MCF 10A (cell line): ENCODE measurements at regions of chr19 and their contacts with region 1.

Region 1: DNA sequence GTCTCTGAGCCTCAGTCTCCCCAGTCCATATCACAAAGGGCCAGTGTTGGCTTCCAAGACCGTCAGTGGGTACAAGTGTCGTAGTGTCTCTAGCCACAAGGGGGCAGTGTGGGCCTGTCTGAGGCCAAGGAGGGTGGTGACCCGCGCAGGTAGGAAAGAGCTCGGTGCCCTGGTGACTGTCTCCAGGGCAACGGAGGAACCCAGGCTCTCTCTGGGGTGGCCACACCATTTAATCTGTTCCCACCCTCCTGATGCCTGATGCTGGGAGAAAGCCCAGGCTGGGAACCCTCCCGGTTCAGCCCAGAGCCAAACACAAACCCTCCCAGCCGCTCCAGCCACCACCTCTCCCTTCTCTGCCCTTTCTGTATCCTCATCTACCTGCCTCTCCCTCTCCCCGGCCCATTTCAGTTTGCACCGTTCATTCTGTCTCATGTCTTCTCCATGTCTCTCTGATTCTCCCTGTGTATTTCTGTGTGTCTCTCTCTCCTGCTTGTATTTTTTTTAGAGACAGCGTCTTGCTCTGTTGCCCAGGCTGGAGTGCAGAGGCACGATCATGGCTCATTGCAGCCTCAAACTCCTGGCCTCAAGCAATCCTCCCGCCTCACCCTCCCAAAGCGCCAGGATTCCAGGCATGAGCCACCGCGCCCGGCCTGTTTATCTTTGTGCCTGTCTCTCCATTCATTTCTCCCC is 17.5 kb upstream of the MEIS3 start:
- DNase-seq: peak; percentile 81
- H3K4me3 Mint-ChIP-seq: no peak overlapping the region
- H3K27ac Mint-ChIP-seq: no peak overlapping the region
- H3K4me1 Mint-ChIP-seq: no peaks in the 10 kb centered on the region
- H3K27me3 Mint-ChIP-seq: peaks cover 39% of the 10 kb centered on the region
- CTCF ChIP-seq: peak; percentile 91

Region 2: GRCh38 chr19:47231215-47231984 is 205.5 kb before region 1 on chr19:
- CTCF ChIA-PET with region 1: no interaction called
- POLR2A ChIA-PET with region 1: no interaction called
- intact Hi-C with region 1: no loop called
- DNase-seq: peak; percentile 76
- H3K4me3 Mint-ChIP-seq: no peak overlapping the region
- H3K27ac Mint-ChIP-seq: peak overlapping the region; percentile 87
- H3K4me1 Mint-ChIP-seq: peaks cover 12% of the 10 kb centered on the region
- H3K27me3 Mint-ChIP-seq: no peaks in the 10 kb centered on the region
- CTCF ChIP-seq: no peak

Region 3: GRCh38 chr19:47483800-47484690 is 47.2 kb after region 1 on chr19 and contains the start of gene KPTN:
- CTCF ChIA-PET with region 1: interaction called, 10 read pairs
- POLR2A ChIA-PET with region 1: interaction called, 5 read pairs
- intact Hi-C with region 1: no loop called
- DNase-seq: peak; percentile 87
- H3K4me3 Mint-ChIP-seq: peak within 1 kb of the TSS; percentile 99
- H3K27ac Mint-ChIP-seq: peak within 1 kb of the TSS; percentile 99
- H3K4me1 Mint-ChIP-seq: peaks cover 5% of the 10 kb centered on the region
- H3K27me3 Mint-ChIP-seq: no peaks in the 10 kb centered on the region
- CTCF ChIP-seq: peak; percentile 99
- total RNA-seq, gene KPTN: 9.7 and 17.6 TPM in 2 replicates

Region 4: GRCh38 chr19:47608074-47608918 is 171.4 kb after region 1 on chr19:
- CTCF ChIA-PET with region 1: interaction called, 4 read pairs
- POLR2A ChIA-PET with region 1: interaction called, 3 read pairs
- intact Hi-C with region 1: loop called (anchors 5 kb)
- DNase-seq: peak; percentile 96
- H3K4me3 Mint-ChIP-seq: peak overlapping the region; percentile 84
- H3K27ac Mint-ChIP-seq: peak overlapping the region; percentile 75
- H3K4me1 Mint-ChIP-seq: peaks cover 15% of the 10 kb centered on the region
- H3K27me3 Mint-ChIP-seq: no peaks in the 10 kb centered on the region
- CTCF ChIP-seq: no peak

Region 5: GRCh38 chr19:47697863-47698609 is 261.2 kb after region 1 on chr19:
- CTCF ChIA-PET with region 1: interaction called, 92 read pairs
- POLR2A ChIA-PET with region 1: interaction called, 3 read pairs
- intact Hi-C with region 1: loop called (anchors 1 kb)
- DNase-seq: peak; percentile 89
- H3K4me3 Mint-ChIP-seq: no peak overlapping the region
- H3K27ac Mint-ChIP-seq: no peak overlapping the region
- H3K4me1 Mint-ChIP-seq: no peaks in the 10 kb centered on the region
- H3K27me3 Mint-ChIP-seq: no peaks in the 10 kb centered on the region
- CTCF ChIP-seq: peak; percentile 99

Region 6: DNA sequence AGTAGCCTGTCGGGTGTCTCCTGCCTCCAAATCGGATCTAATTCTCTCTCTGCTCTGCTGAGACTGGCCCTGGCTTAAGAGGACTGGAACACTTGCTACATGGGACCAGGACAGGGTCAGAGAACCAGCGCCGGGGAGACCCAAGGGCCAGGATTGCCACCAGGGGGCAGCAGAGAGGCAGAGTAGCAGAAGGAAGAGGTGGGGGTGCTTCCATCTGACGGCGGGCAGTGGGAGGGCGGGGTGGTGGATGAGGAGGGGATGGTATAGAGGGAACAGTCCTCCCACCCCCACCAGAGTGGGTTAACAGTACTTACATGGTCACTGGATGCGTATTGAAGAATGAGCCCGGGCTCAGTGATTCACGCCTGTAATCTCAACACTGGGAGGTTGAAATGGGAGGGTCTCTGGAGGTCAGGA is 353.5 kb after region 1 on chr19:
- CTCF ChIA-PET with region 1: interaction called, 3 read pairs
- POLR2A ChIA-PET with region 1: no interaction called
- intact Hi-C with region 1: loop called (anchors 5 kb)
- DNase-seq: peak; percentile 82
- H3K4me3 Mint-ChIP-seq: no peak overlapping the region
- H3K27ac Mint-ChIP-seq: no peak overlapping the region
- H3K4me1 Mint-ChIP-seq: peaks cover 9% of the 10 kb centered on the region
- H3K27me3 Mint-ChIP-seq: no peaks in the 10 kb centered on the region
- CTCF ChIP-seq: peak; percentile 84